ENCODE measurements at regions of chr18 and their contacts with region 1.

Region 1: GRCh38 chr18:36372903-36373311 is 75.4 kb downstream of the FHOD3 start:
- DNase-seq: peak in 1 of 42 donors; percentile 21

Region 2: DNA sequence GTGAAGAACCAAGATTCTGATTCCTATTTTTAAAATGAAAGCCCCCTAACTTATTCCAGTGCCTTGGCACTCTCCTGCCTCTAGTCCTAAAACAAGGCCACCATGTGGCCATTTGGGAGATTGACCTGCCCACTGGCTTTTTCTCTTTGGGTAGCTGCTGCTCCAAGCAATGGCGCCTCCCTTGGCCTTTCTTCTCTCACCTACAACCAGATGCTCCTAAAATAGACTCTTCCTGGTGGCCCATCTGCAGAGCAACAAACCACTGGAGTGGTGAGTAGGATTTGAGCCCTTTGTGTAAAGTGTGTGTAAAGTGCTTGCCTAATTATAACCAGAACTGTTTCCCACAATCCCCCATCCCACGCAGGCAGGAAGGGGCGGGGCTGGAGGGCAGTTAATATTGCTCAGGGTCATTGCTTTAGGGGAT is 38.9 kb after region 1 on chr18:
- intact Hi-C with region 1: loop called (anchors 5 kb)
- DNase-seq: no peak